Testis (tissue), 5 donors: ENCODE measurements at regions of chr18 and their contacts with region 1.

Region 1: GRCh38 chr18:79380816-79381806 is 14.6 kb upstream of the NFATC1 start:
- DNase-seq: peak; percentile 79
- H3K4me3 ChIP-seq: no peak overlapping the region
- H3K27ac ChIP-seq: no peak overlapping the region
- H3K4me1 ChIP-seq: no peaks in the 10 kb centered on the region
- H3K27me3 ChIP-seq: no peaks in the 10 kb centered on the region
- CTCF ChIP-seq: peak; percentile 63 to 87 (median 81)
- POLR2A ChIP-seq: no peak

Region 2: DNA sequence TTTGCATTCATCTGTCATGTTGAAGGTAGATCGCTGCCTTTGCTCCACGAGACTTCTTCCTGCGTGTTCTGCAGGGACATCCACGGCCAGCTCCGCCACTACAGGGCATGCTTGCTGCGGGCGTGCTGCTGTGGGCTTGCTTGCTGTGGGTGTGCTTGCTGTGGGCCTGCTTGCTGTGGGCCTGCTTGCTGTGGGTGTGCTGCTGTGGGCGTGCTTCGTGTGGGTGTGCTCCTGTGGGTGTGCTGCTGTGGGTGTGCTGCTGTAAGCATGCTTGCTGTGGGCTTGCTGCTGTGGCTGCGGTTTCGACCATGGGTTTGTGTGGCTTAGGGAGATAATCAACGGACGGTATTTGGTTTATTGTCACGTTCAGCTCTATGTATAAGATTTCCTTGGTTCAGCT is 146.7 kb before region 1 on chr18:
- intact Hi-C with region 1: no loop called
- DNase-seq: no peak
- H3K4me3 ChIP-seq: no peak overlapping the region
- H3K27ac ChIP-seq: no peak overlapping the region
- H3K4me1 ChIP-seq: no peaks in the 10 kb centered on the region
- H3K27me3 ChIP-seq: no peaks in the 10 kb centered on the region
- CTCF ChIP-seq: no peak
- POLR2A ChIP-seq: no peak

Region 3: DNA sequence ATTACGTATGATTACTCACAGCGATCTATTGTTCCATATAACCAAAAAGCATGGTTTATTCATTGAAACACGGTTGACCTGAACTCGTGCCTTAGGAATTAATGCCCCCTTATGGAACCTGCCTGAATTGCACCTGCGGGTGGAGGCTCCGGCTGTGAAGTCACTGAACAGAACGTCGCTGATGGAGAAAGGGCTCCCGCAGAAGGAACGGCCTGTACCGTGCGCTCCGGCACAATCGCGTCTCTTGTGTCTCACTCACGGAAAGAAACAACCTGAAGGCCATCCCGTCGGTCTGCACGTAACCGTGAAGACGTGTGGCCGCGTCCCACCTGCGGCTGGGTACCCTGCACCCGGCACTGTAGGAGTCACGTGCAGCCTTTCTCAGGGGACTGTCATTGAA is 147.7 kb after region 1 on chr18:
- intact Hi-C with region 1: loop called (anchors 5 kb)
- DNase-seq: peak; percentile 83
- H3K4me3 ChIP-seq: no peak overlapping the region
- H3K27ac ChIP-seq: no peak overlapping the region
- H3K4me1 ChIP-seq: peaks cover 3% of the 10 kb centered on the region
- H3K27me3 ChIP-seq: no peaks in the 10 kb centered on the region
- CTCF ChIP-seq: peak; percentile 81 to 88 (median 87)
- POLR2A ChIP-seq: no peak

Region 4: GRCh38 chr18:79644006-79644665 is 263.0 kb after region 1 on chr18:
- intact Hi-C with region 1: loop called (anchors 5 kb)
- DNase-seq: peak; percentile 74
- H3K4me3 ChIP-seq: no peak overlapping the region
- H3K27ac ChIP-seq: no peak overlapping the region
- H3K4me1 ChIP-seq: no peaks in the 10 kb centered on the region
- H3K27me3 ChIP-seq: no peaks in the 10 kb centered on the region
- CTCF ChIP-seq: peak; percentile 72 to 92 (median 83)
- POLR2A ChIP-seq: no peak